Activated CD4-positive, alpha-beta T cell treated with anti-CD3 and anti-CD28 coated beads, Interleukin-2, amount 10 ng/mL, durations not matched to agents 24 days and 14 days (primary cell): ENCODE measurements at regions of chr14 and their contacts with region 1.

Region 1: GRCh38 chr14:80587075-80587724 is 354.3 kb downstream of the CEP128 start:
- DNase-seq: peak; percentile 64
- H3K4me3 Mint-ChIP-seq: no peak overlapping the region
- H3K27ac Mint-ChIP-seq: peak overlapping the region; percentile 22
- H3K4me1 Mint-ChIP-seq: peaks cover 10% of the 10 kb centered on the region
- H3K27me3 Mint-ChIP-seq: no peaks in the 10 kb centered on the region

Region 2: GRCh38 chr14:80518173-80518572 is 69.0 kb before region 1 on chr14:
- intact Hi-C with region 1: no loop called
- DNase-seq: no peak
- H3K4me3 Mint-ChIP-seq: no peak overlapping the region
- H3K27ac Mint-ChIP-seq: no peak overlapping the region
- H3K4me1 Mint-ChIP-seq: no peaks in the 10 kb centered on the region
- H3K27me3 Mint-ChIP-seq: no peaks in the 10 kb centered on the region

Region 3: DNA sequence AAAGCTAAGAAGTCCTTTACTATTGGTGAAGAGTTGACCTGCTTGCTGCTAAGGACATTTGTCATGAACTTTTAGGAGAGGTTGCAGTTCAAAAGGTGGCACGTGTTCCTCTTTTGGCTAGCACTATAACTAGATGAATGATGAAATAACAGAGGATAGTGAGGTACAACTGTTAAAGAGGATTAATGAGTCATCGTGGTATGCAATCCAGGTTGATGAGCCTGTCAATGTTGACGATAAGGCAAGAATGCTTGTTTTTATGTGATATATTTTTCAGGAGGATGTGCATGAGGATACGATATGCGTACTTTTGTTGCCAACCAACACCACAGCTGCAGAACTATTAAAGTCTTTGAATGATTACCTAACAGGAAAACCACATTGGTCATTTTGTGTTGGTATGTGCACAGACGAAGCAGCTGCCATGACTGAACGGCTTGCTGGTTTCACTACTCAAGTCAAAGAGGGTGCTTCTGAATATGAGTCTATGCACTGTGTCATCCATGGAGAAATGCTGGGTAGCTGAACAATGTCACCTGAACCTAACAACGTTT is 343.7 kb after region 1 on chr14:
- intact Hi-C with region 1: loop called (anchors 1 kb)
- DNase-seq: peak; percentile 87
- H3K4me3 Mint-ChIP-seq: peak overlapping the region; percentile 73
- H3K27ac Mint-ChIP-seq: peak overlapping the region; percentile 90
- H3K4me1 Mint-ChIP-seq: peaks cover 51% of the 10 kb centered on the region
- H3K27me3 Mint-ChIP-seq: no peaks in the 10 kb centered on the region

Region 4: DNA sequence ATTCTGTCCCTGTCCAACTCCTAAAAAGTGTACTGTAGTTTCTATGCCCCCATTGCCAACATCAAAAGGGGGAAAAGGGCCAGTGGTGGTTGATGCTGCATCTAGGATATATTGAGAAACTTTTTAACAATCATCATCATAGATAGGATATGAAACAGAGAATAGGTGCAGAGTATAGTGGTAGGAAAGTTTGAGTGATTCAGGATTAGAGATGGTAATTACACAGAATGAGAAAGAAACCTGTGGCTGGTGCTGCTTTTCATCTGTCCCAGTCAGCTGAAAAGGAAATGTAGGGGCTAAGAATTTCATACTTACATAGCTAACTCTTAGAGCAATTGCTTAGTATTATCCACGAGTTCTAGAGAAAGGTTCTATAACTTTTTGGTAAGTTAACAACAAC is 566.0 kb after region 1 on chr14:
- intact Hi-C with region 1: loop called (anchors 1 kb)
- DNase-seq: no peak
- H3K4me3 Mint-ChIP-seq: no peak overlapping the region
- H3K27ac Mint-ChIP-seq: peak overlapping the region; percentile 54
- H3K4me1 Mint-ChIP-seq: peaks cover 5% of the 10 kb centered on the region
- H3K27me3 Mint-ChIP-seq: peaks cover 4% of the 10 kb centered on the region